GM12878 (cell line): ENCODE measurements at regions of chr3 and their contacts with region 1.

Region 1: DNA sequence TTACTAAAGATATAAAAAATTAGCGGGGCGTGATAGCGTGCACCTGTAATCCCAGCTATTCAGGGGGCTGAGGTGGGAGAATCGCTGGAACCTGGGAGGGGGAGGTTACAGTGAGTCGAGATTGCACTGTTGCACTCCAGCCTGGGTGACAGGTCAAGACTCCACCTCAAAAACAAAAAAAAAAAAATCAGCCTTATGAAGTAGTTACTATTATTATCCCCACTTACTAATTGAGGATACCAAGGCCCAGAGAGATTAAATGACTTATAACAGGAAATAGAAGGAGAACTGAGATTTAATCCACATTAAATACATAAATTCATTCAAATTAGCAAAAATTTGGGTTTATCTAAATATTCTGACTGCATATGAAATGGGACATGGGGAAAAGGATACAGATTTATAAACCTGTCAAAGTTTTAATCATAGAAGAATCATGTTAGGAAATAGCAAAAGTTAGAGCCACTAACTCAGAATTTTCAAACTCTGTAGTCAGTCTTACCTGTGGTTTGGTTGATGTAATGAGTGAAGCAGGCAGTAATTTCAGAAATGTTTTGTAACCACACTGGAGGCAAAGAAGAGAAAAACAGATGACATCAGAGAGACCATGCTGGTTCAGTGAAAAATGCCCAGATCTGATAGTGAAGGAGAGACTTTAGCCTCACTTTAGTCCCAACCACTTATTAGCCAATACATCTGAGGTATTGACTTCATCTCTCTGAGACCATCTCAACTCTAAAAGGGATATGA is 25.0 kb upstream of the ACAP2 start:
- DNase-seq: no peak
- ATAC-seq: no peak; the same call in 2 of the 3 replicates
- H3K4me3 ChIP-seq: no peak overlapping the region
- H3K27ac ChIP-seq: no peak overlapping the region
- H3K4me1 ChIP-seq: no peaks in the 10 kb centered on the region
- H3K27me3 ChIP-seq: no peaks in the 10 kb centered on the region
- CTCF ChIP-seq: no peak
- EP300 ChIP-seq: no peak
- POLR2A ChIP-seq: no peak
- RAD21 ChIP-seq: no peak

Region 2: GRCh38 chr3:195508185-195508584 is 40.4 kb after region 1 on chr3:
- CTCF ChIA-PET with region 1: no interaction called
- POLR2A ChIA-PET with region 1: no interaction called
- RAD21 ChIA-PET with region 1: no interaction called
- SMC1A ChIA-PET with region 1: no interaction called
- in situ Hi-C with region 1: loop called (anchors 10 kb)
- intact Hi-C with region 1: no loop called
- DNase-seq: no peak
- ATAC-seq: no peak
- H3K4me3 ChIP-seq: no peak overlapping the region
- H3K27ac ChIP-seq: no peak overlapping the region
- H3K4me1 ChIP-seq: no peaks in the 10 kb centered on the region
- H3K27me3 ChIP-seq: no peaks in the 10 kb centered on the region
- CTCF ChIP-seq: no peak
- EP300 ChIP-seq: no peak
- POLR2A ChIP-seq: no peak
- RAD21 ChIP-seq: no peak